Natural killer cell (primary cell): ENCODE measurements at regions of chr2 and their contacts with region 1.

Region 1: GRCh38 chr2:88590998-88591613 is 36.2 kb downstream of the EIF2AK3 start:
- DNase-seq: peak in 1 of 2 donors; percentile 74
- ATAC-seq: peak; percentile 88 to 99 (median 93)
- H3K4me3 ChIP-seq: no peak overlapping the region
- H3K4me3 Mint-ChIP-seq: no peak overlapping the region
- H3K27ac ChIP-seq: no peak overlapping the region
- H3K27ac Mint-ChIP-seq: peak overlapping the region in 1 of 2 donors; percentile 48
- H3K4me1 ChIP-seq: no peaks in the 10 kb centered on the region
- H3K4me1 Mint-ChIP-seq: peaks cover 6 to 7% of the 10 kb centered on the region in 2 donors
- H3K27me3 ChIP-seq: no peaks in the 10 kb centered on the region
- H3K27me3 Mint-ChIP-seq: no peaks in the 10 kb centered on the region
- CTCF ChIP-seq: peak; percentile 87

Region 2: DNA sequence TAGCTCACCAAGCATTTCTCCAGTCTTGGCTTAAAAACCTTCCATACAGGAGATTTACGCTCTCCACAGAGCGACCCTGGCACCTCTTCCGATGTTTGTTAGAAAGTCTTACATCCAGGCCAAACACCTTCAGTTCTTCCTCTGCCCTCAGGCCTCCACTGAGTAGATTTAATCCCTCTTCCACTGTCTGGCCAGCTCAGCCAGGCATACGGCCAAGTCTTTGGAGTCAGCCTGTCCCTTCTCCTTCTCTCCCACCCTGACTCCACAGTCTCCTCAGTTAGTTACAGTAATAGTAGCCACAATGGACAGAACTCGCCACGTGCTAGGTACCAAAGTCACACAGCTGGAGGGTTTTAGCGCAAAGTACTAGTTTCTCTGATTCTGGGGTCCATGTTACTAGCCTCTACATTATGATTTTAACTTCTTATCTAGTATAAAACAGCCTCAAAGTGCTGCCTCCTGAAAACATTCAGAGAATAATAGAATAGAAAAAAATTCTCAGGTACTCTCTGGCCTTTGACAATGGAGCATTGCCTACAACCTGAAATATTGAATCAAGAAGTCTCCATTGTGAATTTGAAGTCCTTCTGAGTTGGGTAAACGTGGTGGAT is 381.5 kb before region 1 on chr2:
- intact Hi-C with region 1: no loop called
- DNase-seq: no peak
- ATAC-seq: no peak
- H3K4me3 ChIP-seq: no peak overlapping the region
- H3K4me3 Mint-ChIP-seq: no peak overlapping the region
- H3K27ac ChIP-seq: no peak overlapping the region
- H3K27ac Mint-ChIP-seq: no peak overlapping the region
- H3K4me1 ChIP-seq: no peaks in the 10 kb centered on the region
- H3K4me1 Mint-ChIP-seq: no peaks in the 10 kb centered on the region
- H3K27me3 ChIP-seq: no peaks in the 10 kb centered on the region
- H3K27me3 Mint-ChIP-seq: peaks cover 7 to 43% of the 10 kb centered on the region in 2 donors
- CTCF ChIP-seq: no peak

Region 3: DNA sequence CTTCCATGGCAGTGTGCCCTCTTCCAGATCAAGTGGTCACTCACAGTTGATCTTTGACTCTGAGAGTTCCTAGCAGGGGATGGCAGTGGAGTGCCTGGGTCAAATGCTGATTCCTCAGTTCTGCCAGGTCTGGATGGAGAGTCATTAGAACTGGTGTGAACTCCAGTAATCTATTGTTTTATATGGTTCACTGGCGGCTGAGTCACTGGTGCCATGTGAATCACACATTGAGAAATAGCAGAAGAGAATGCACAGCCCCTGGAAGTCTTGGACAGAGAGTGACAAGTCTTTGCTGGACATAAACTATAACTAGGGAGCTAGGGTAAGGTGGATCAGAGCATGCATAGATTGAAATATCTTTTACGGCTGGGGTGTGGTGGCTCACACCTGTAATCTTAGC is 50.8 kb before region 1 on chr2:
- intact Hi-C with region 1: no loop called
- DNase-seq: no peak
- ATAC-seq: no peak
- H3K4me3 ChIP-seq: no peak overlapping the region
- H3K4me3 Mint-ChIP-seq: no peak overlapping the region
- H3K27ac ChIP-seq: no peak overlapping the region
- H3K27ac Mint-ChIP-seq: no peak overlapping the region
- H3K4me1 ChIP-seq: no peaks in the 10 kb centered on the region
- H3K4me1 Mint-ChIP-seq: no peaks in the 10 kb centered on the region
- H3K27me3 ChIP-seq: no peaks in the 10 kb centered on the region
- H3K27me3 Mint-ChIP-seq: peaks cover 14 to 19% of the 10 kb centered on the region in 2 donors
- CTCF ChIP-seq: no peak

Region 4: GRCh38 chr2:88554189-88554588 is 36.9 kb before region 1 on chr2:
- intact Hi-C with region 1: no loop called
- DNase-seq: no peak
- ATAC-seq: no peak
- H3K4me3 ChIP-seq: no peak overlapping the region
- H3K4me3 Mint-ChIP-seq: no peak overlapping the region
- H3K27ac ChIP-seq: no peak overlapping the region
- H3K27ac Mint-ChIP-seq: no peak overlapping the region
- H3K4me1 ChIP-seq: no peaks in the 10 kb centered on the region
- H3K4me1 Mint-ChIP-seq: no peaks in the 10 kb centered on the region
- H3K27me3 ChIP-seq: peaks cover 5% of the 10 kb centered on the region
- H3K27me3 Mint-ChIP-seq: peaks cover 7 to 11% of the 10 kb centered on the region in 2 donors
- CTCF ChIP-seq: no peak

Region 5: DNA sequence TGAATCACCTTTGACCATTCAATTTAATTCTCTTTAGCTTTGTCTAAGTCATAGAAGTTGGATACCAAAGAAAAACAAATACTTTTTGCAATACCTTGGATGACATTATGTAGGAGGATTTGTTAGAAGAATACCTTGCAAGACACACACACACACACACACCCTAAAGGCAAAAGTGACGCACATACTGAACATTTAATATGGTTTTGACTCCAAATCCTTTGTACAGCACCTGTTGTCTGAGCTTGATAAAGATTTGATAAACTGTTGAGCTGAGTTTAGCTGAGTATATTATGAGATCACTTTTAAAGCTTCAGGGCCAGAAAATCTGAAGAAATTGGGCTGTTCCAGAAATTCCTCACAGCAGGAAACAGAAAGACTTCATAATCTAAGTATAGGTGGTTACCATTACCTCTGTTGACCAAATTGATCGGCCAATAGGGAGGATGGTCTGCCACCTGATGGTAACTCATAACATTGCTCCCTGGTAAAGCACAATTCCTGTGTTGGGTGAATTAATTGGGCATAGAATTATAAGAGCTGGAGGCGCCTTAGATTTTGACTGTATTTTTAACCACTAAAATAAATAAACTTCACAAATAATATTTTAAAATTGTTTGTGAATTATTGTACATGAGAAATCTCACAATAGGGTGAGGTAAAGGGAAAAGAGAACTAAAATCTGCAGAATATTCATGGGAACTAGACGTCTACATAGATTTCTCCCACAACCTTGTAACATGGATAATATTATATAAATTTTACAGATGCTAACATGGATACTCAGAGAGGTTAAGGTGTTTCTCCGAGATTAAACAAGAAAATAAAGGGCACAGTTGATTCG is 78.5 kb after region 1 on chr2:
- intact Hi-C with region 1: loop called (anchors 1 kb)
- DNase-seq: peak in 1 of 2 donors; percentile 61
- ATAC-seq: peak; percentile 61 to 86 (median 82)
- H3K4me3 ChIP-seq: no peak overlapping the region
- H3K4me3 Mint-ChIP-seq: no peak overlapping the region
- H3K27ac ChIP-seq: no peak overlapping the region
- H3K27ac Mint-ChIP-seq: no peak overlapping the region
- H3K4me1 ChIP-seq: no peaks in the 10 kb centered on the region
- H3K4me1 Mint-ChIP-seq: no peaks in the 10 kb centered on the region
- H3K27me3 ChIP-seq: no peaks in the 10 kb centered on the region
- H3K27me3 Mint-ChIP-seq: peaks cover 0 to 4% of the 10 kb centered on the region in 2 donors
- CTCF ChIP-seq: peak; percentile 61